ENCODE measurements at regions of chr20 and their contacts with region 1.

Region 1: DNA sequence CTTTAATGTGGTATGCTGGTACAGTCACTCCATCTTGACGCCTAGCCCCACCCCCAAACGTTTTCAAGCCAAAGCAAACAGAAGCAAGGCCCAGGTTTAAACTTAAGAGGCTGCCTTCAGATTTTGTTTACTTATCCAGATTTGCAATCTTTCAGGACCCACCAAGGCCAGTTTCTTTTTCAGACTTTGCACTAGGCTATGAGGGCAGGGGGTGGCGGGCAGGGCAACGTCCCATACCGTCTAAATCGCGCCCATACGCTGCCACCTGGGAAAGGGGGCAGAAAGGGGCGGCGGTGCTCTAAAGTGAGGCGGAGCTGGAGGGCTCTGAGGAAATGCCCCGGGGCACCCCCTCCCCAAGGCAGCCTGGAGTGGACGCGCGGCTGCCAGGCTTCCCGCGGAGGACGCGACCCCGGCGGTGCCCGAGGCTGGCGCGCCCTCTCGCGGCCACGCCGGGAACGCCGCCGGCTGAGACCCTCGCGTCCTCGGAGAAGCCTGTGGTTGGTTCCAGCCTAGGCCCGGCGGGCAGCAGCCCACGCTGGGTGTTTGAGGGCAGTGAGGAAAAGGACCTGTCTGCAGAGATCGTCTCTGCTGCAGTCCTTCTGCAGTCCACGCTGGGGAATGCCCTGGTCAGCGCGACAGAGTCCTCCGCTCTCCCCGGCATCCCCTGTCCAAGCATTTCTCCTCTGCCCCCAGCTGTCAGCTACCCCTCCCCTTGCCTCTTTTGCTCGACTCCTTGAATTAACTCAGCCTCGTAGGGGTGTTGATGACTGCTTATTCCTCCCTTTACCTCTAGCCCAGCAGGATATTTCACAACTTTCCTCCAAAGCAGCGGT is 129.2 kb upstream of the PRND start:
- DNase-seq: peak; percentile 88
- H3K4me3 ChIP-seq: peak overlapping the region; percentile 41
- H3K27ac ChIP-seq: peak overlapping the region; percentile 85
- H3K4me1 ChIP-seq: peaks cover 36% of the 10 kb centered on the region
- H3K27me3 ChIP-seq: no peaks in the 10 kb centered on the region
- CTCF ChIP-seq: peak; percentile 77

Region 2: GRCh38 chr20:4108495-4109306 is 483.8 kb before region 1 on chr20:
- CTCF ChIA-PET with region 1: no interaction called
- POLR2A ChIA-PET with region 1: interaction called, 3 read pairs
- intact Hi-C with region 1: loop called (anchors 2 kb)
- DNase-seq: peak; percentile 88
- H3K4me3 ChIP-seq: no peak overlapping the region
- H3K27ac ChIP-seq: peak overlapping the region; percentile 58
- H3K4me1 ChIP-seq: peaks cover 30% of the 10 kb centered on the region
- H3K27me3 ChIP-seq: no peaks in the 10 kb centered on the region
- CTCF ChIP-seq: peak; percentile 94

Region 3: DNA sequence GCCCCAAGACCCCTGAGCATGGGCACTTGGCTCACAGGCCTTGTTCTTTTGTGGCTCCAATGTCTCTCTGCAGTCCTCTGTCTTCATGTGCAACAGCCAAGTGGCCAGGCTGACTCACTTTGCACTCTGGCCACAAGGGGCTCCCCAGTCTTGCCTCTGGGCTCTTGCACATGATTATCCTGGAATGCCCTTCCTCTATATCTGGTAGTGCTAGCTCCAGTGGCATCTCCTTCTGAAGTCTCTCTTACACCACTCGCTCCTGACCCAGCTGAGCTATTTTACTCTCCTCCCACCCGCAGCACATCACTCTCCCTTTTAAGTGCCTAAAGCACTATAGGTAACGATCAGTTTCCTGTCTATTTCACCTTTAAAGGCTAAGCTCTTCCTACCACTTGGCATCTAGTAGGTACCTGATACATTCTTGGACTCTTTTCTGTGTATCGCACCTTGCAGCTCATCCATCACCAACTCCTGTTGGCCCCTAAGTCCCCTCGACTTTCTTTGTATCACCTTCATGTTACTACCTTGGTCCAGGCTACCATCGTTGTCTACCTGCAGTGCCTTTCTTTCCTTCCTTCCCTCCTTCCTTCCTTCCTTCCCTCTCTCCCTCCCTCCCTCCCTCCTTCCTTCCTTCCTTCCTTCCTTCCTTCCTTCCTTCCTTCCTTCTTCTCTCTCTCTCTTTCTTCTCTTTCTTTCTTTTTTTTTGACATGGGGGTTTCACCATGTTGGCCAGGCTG is 365.3 kb before region 1 on chr20:
- CTCF ChIA-PET with region 1: interaction called, 6 read pairs
- POLR2A ChIA-PET with region 1: no interaction called
- intact Hi-C with region 1: loop called (anchors 1 kb)
- DNase-seq: peak; percentile 74
- H3K4me3 ChIP-seq: no peak overlapping the region
- H3K27ac ChIP-seq: peak overlapping the region; percentile 81
- H3K4me1 ChIP-seq: peaks cover 72% of the 10 kb centered on the region
- H3K27me3 ChIP-seq: no peaks in the 10 kb centered on the region
- CTCF ChIP-seq: peak; percentile 61

Region 4: GRCh38 chr20:4244700-4245485 is 347.6 kb before region 1 on chr20:
- CTCF ChIA-PET with region 1: no interaction called
- POLR2A ChIA-PET with region 1: no interaction called
- intact Hi-C with region 1: loop called (anchors 1 kb)
- DNase-seq: no peak
- H3K4me3 ChIP-seq: peak overlapping the region; percentile 75
- H3K27ac ChIP-seq: peak overlapping the region; percentile 95
- H3K4me1 ChIP-seq: peaks cover 29% of the 10 kb centered on the region
- H3K27me3 ChIP-seq: no peaks in the 10 kb centered on the region
- CTCF ChIP-seq: no peak

Region 5: GRCh38 chr20:4470375-4470774 is 122.2 kb before region 1 on chr20:
- CTCF ChIA-PET with region 1: no interaction called
- POLR2A ChIA-PET with region 1: interaction called, 3 read pairs
- intact Hi-C with region 1: loop called (anchors 5 kb)
- DNase-seq: peak; percentile 94
- H3K4me3 ChIP-seq: peak overlapping the region; percentile 49
- H3K27ac ChIP-seq: peak overlapping the region; percentile 73
- H3K4me1 ChIP-seq: peaks cover 54% of the 10 kb centered on the region
- H3K27me3 ChIP-seq: no peaks in the 10 kb centered on the region
- CTCF ChIP-seq: no peak; the same call in 1 of the 2 replicates

Region 6: GRCh38 chr20:4483486-4483885 is 109.0 kb before region 1 on chr20:
- CTCF ChIA-PET with region 1: no interaction called
- POLR2A ChIA-PET with region 1: no interaction called
- intact Hi-C with region 1: loop called (anchors 2 kb)
- DNase-seq: peak; percentile 97
- H3K4me3 ChIP-seq: peak overlapping the region; percentile 15
- H3K27ac ChIP-seq: peak overlapping the region; percentile 99
- H3K4me1 ChIP-seq: peaks cover 92% of the 10 kb centered on the region
- H3K27me3 ChIP-seq: no peaks in the 10 kb centered on the region
- CTCF ChIP-seq: no peak

Region 7: DNA sequence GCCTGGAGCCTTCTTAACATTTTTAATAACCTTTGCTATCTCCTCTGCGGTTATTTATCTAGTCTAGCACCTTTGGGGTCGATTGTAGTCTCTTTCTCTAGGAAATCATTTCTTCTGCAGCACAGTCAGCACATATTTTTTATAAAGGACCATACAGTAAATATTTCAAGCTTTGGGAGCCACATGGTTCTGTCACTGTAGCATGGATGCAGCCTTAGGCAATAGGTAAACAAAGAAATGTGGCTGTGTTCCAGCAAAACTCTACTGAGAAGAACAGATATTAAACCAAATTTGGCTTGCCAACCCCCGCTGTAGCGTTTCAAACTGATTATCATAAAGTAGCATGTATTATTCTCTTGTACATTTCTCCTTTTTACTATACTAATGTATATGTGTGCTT is 313.1 kb after region 1 on chr20:
- CTCF ChIA-PET with region 1: no interaction called
- POLR2A ChIA-PET with region 1: no interaction called
- intact Hi-C with region 1: no loop called
- DNase-seq: no peak
- H3K4me3 ChIP-seq: no peak overlapping the region
- H3K27ac ChIP-seq: no peak overlapping the region
- H3K4me1 ChIP-seq: no peaks in the 10 kb centered on the region
- H3K27me3 ChIP-seq: no peaks in the 10 kb centered on the region
- CTCF ChIP-seq: no peak

Region 8: DNA sequence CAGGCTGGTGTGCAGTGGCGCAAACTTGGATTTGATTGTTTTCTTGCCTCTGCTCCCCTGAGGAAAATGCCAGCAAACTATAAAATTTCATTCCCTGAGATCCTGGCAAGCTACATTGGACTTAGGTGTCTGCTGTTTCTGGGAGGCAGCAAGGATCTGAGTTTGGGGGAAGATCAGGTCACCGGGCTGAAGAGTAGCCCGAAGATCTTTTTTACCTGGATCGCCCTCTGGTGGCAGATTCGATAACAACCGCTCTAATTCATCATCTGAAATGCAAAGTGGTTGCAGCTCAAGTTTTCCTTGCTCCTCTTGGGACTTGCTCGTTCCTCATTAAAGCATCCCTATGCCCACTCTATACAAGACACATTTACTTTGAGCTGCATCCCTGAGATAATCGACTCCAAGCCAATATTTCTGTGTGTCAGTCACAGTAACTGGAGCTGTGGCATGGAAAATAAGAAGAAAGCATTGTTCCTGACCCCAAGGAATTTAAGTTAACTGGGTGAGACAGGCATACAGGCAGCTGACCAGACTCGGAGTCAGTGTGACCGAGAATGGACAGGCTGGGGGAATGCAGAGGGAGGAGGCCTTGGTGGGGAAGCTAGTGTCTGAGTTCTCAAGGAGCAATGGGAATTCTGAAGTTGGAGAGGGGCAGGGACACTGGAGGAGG is 856.1 kb after region 1 on chr20:
- CTCF ChIA-PET with region 1: no interaction called
- POLR2A ChIA-PET with region 1: no interaction called
- intact Hi-C with region 1: no loop called
- DNase-seq: peak; percentile 60
- H3K4me3 ChIP-seq: no peak overlapping the region
- H3K27ac ChIP-seq: no peak overlapping the region
- H3K4me1 ChIP-seq: no peaks in the 10 kb centered on the region
- H3K27me3 ChIP-seq: peaks cover 42% of the 10 kb centered on the region
- CTCF ChIP-seq: peak; percentile 80

Measured in A673 (cell line).